ENCODE measurements at regions of chr16 and their contacts with region 1.

Region 1: GRCh38 chr16:19583665-19584300 is 28.3 kb downstream of the VPS35L start:
- DNase-seq: peak; percentile 32
- H3K4me3 Mint-ChIP-seq: no peak overlapping the region
- H3K27ac Mint-ChIP-seq: no peak overlapping the region
- H3K4me1 Mint-ChIP-seq: peaks cover 9% of the 10 kb centered on the region
- H3K27me3 Mint-ChIP-seq: no peaks in the 10 kb centered on the region

Region 2: DNA sequence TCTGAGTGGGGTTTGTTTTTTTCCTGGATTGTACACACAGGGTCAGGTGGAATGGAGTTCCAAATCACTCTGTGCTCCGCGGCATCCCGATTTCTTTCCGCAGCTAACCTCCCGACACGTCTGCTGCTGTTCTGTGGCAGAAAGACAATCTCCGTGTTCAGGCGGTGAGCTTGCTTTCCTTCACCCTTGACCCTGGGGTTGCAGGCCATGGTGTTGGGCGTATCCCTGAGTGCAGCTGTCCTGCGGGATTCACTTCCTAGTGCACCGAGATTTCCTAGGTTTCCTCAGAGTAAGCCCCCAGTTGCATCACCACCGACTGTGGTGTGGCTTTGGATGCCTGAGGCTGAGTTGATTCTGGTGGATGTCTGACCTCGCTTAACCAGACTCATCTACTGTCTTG is 774.6 kb before region 1 on chr16:
- CTCF ChIA-PET with region 1: no interaction called
- POLR2A ChIA-PET with region 1: no interaction called
- intact Hi-C with region 1: no loop called
- DNase-seq: no peak
- H3K4me3 Mint-ChIP-seq: no peak overlapping the region
- H3K27ac Mint-ChIP-seq: no peak overlapping the region
- H3K4me1 Mint-ChIP-seq: peaks cover 13% of the 10 kb centered on the region
- H3K27me3 Mint-ChIP-seq: no peaks in the 10 kb centered on the region

Region 3: GRCh38 chr16:19601083-19601976 is 17.5 kb after region 1 on chr16:
- CTCF ChIA-PET with region 1: interaction called, 9 read pairs
- POLR2A ChIA-PET with region 1: no interaction called
- intact Hi-C with region 1: loop called (anchors 1 kb)
- DNase-seq: peak; percentile 25
- H3K4me3 Mint-ChIP-seq: no peak overlapping the region
- H3K27ac Mint-ChIP-seq: no peak overlapping the region
- H3K4me1 Mint-ChIP-seq: peaks cover 1% of the 10 kb centered on the region
- H3K27me3 Mint-ChIP-seq: no peaks in the 10 kb centered on the region

Region 4: GRCh38 chr16:19717771-19718602 is 134.2 kb after region 1 on chr16 and contains the starts of genes IQCK and KNOP1:
- CTCF ChIA-PET with region 1: no interaction called
- POLR2A ChIA-PET with region 1: no interaction called
- intact Hi-C with region 1: loop called (anchors 10 kb)
- DNase-seq: peak; percentile 93
- H3K4me3 Mint-ChIP-seq: peak within 1 kb of the TSS; percentile 92
- H3K27ac Mint-ChIP-seq: peak within 1 kb of the TSS; percentile 79
- H3K4me1 Mint-ChIP-seq: peaks cover 27% of the 10 kb centered on the region
- H3K27me3 Mint-ChIP-seq: no peaks in the 10 kb centered on the region
- total RNA-seq, gene IQCK: 2.2 to 3.0 TPM
- total RNA-seq, gene KNOP1: 24.3 to 26.4 TPM